BJ (cell line): ENCODE measurements at regions of chr22 and their contacts with region 1.

Region 1: DNA sequence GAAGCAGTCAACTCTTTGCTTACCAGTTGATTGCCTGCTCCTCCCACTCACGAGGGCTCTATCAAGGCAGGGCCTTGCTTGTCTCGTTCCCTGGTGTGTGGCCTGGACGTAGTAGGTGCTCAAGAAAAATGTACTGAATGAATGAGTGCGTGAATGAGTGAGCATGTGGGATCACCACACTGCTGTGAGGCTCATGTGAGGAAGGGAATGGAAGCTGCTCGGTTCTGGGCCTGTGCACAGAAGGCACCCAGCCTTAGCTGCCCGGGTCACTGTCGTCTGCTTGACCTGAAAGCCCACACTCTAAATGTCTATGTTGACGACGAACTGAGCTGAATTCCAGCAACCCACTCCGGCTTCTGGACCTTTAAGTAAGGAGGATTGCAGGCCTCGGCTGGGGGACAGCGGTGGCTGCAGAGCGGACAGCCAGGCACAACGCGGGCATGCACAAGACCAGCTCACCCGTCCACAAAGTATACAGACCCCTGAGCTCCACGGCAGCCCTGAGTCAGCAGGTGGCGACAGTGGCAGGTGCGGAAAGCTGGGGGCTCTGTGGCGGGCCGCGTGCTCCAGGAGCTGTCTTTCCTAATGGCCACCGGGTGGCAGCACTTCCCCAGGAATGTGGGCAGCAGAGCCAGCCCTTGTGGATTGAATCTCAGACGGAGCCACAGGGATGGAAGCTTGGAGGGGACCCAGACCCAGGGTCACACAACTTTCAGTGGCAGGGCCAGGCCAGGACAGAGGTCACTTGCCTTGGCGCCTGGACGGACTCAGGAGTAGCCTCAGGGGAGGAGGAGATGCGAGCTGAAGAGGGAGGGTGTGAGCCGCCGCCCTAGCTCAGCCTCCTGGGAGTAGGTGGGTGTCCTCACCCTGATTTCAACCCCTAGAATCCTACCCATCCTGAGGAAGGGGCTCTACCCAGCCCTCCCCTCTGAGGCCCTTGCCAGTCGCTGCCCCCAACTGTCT is 5.0 kb upstream of the PICK1 start:
- DNase-seq: no peak
- H3K4me3 ChIP-seq: no peak overlapping the region
- H3K27me3 ChIP-seq: peaks cover 6% of the 10 kb centered on the region
- CTCF ChIP-seq: peak; percentile 81

Region 2: DNA sequence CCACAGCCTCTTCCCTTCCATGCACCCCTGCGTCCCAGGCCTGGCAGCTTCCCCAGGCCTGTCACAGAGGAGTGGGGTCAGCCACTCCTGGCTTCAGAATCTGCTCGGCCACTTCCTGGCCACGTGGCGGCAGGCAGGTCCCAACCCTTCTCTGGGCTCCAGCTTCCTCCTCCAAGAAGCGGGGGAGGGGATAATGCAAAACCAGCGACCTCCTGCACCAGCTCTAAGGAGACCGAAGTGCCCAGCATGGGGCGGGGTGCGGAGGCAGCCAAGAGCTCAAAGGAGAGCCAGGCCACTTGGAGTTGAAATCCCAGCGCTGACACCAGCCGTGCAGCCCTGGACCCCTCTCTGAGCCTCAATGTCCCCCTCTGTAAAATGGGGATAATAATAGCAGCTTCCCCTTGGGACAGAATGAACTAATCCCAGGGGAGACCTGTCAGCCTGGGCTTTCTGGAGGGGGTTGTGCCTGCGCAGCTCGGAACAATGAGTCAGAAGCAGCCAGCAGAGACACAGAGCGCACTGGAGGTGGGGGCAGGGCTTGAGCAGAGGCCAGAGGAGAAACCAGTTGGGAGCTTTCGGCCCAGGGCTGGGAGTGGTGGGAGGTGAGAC is 17.8 kb before region 1 on chr22:
- CTCF ChIA-PET with region 1: interaction called, 19 read pairs
- POLR2A ChIA-PET with region 1: no interaction called
- DNase-seq: peak; percentile 32
- H3K4me3 ChIP-seq: no peak overlapping the region
- H3K27me3 ChIP-seq: no peaks in the 10 kb centered on the region
- CTCF ChIP-seq: no peak

Region 3: GRCh38 chr22:38041760-38042487 is 10.3 kb before region 1 on chr22:
- CTCF ChIA-PET with region 1: interaction called, 11 read pairs
- POLR2A ChIA-PET with region 1: interaction called, 3 read pairs
- DNase-seq: no peak
- H3K4me3 ChIP-seq: no peak overlapping the region
- H3K27me3 ChIP-seq: no peaks in the 10 kb centered on the region; the same call in 1 of the 2 replicates
- CTCF ChIP-seq: no peak

Region 4: DNA sequence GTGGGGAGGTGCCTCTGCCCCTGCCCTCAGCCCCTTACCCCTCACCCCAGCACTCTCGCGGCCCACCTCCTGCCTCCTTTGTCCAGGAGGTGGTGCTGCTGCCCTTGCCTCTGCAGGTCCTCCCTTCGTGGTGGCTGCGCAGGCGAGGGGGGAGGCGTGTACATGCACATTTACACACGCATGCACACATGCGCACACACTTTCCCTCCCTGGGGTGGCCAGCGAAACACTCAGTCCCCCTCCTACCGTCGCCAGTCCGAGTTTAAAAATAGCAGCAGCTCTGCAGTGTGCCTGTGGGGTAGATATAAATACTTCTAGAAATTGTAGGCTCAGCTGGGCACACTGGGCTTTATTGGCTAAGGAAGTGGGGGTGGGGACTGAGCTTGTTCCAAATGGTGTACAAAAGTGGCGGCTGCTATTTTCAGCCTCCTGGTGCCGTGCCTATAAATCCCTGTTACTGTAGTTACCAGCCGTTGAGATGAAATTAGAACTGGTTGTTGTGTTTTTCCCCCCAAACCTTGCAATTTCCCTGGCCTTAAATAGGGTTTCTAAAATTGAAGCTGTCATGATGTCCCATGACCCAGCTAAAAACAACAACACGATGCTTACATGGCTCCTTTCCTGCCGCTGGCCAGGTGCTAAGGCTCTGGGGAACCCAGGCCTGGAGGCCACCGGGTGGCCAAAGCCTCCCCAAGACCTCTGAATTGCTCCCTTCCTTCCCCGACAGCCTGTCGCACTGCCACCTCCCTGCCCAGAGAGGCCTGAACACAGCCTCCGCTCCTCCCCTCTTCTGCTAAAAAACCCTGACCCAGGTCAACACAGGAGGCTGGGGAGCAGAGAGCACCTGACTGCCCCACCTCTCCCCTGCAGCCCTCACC is 17.4 kb after region 1 on chr22:
- CTCF ChIA-PET with region 1: interaction called, 11 read pairs
- POLR2A ChIA-PET with region 1: no interaction called
- DNase-seq: no peak
- H3K4me3 ChIP-seq: no peak overlapping the region
- H3K27me3 ChIP-seq: no peaks in the 10 kb centered on the region
- CTCF ChIP-seq: peak; percentile 75

Region 5: GRCh38 chr22:38214256-38215056 is 162.3 kb after region 1 on chr22:
- CTCF ChIA-PET with region 1: no interaction called
- POLR2A ChIA-PET with region 1: no interaction called
- DNase-seq: no peak
- H3K4me3 ChIP-seq: no peak overlapping the region
- H3K27me3 ChIP-seq: no peaks in the 10 kb centered on the region
- CTCF ChIP-seq: no peak

Region 6: GRCh38 chr22:38569972-38570778 is 518.0 kb after region 1 on chr22 and contains the start of gene DMC1:
- CTCF ChIA-PET with region 1: interaction called, 41 read pairs
- POLR2A ChIA-PET with region 1: no interaction called
- DNase-seq: no peak
- H3K4me3 ChIP-seq: peak within 1 kb of the TSS; percentile 52
- H3K27me3 ChIP-seq: no peaks in the 10 kb centered on the region
- CTCF ChIP-seq: 0 out of 2 replicates have a peak, but pooled peaks have one; percentile 13
- polyA plus RNA-seq, gene DMC1: 0.37 and 0.97 TPM in 2 replicates